ENCODE measurements at regions of chr1 and their contacts with region 1.

Region 1: DNA sequence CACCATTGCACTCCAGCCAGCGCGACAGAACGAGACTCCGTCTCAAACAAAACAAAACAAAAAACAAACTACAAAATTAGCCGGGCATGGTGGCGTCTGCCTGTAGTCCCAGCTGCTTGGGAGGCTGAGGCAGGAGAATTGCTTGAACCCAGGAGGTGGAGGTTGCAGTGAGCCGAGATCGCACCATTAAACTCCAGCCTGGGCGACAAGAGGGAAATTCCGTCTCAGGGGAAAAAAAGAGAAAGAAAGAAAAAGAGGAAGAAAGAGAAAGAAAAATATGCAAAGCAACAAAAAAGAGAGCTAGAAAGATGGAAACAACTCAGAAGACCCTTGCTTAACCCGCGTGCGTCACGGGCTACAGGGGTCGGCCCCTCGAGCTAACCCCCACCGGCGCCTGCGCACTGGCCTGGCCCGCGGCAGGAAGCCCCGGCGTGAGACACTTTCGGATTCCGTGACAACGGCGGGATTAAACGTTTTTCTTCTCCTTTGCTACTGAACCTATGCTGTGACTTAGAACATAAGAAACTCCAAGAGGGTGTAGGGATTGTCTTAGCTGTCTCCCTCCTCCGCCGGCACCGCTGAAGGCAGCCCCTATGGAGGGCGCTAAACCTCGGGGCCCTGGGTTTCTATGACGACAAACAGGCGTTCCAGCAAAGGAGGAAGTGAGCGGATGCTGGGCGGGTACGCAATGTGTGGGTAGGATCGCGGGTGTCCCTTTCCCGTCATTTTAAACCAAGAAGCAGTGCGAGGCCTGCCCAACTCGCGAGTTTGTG is at the start of gene AXDND1:
- DNase-seq: peak; percentile 86 to 94 (median 90)
- ATAC-seq: peak; percentile 97
- H3K4me3 ChIP-seq: peak within 1 kb of the TSS; percentile 57
- H3K27ac ChIP-seq: peak within 1 kb of the TSS; percentile 96
- H3K4me1 ChIP-seq: peaks cover 14 to 16% of the 10 kb centered on the region in 2 experiments
- H3K27me3 ChIP-seq: no peaks in the 10 kb centered on the region
- CTCF ChIP-seq: peak in 2 of 3 experiments; percentile 40 to 54; a peak in 4 of 6 replicates
- EP300 ChIP-seq: 0 out of 2 replicates have a peak, but pooled peaks have one; percentile 24
- POLR2A ChIP-seq: peak; percentile 76
- RAD21 ChIP-seq: peak; percentile 6 to 22; a peak in 2 of 4 replicates
- polyA plus RNA-seq, gene AXDND1: 0.03 to 0.13 TPM

Region 2: DNA sequence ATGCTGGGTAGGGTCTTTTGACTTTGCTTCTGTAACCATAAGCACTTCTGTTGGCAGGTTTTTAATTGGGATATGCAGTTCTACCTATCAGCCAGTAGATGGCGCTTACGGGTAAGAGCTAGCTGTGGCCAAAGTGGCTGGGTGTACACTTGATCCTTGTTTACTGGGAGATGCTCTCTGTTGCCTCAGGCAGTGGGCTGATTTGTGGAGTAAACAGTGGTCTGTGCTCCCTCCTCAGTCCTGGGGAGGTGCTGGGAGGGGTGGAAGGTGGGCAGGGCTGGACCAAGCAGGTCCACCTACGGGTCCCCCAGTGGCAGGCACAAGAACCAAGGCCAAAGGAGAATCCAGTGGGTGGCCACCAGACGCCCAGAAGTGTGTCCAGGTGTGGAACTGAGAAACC is 597.1 kb before region 1 on chr1:
- CTCF ChIA-PET with region 1: no interaction called
- POLR2A ChIA-PET with region 1: no interaction called
- in situ Hi-C with region 1: loop called (anchors 10 kb)
- intact Hi-C with region 1: no loop called
- DNase-seq: peak; percentile 58 to 64 (median 62)
- ATAC-seq: peak; percentile 88
- H3K4me3 ChIP-seq: no peak overlapping the region
- H3K27ac ChIP-seq: no peak overlapping the region
- H3K4me1 ChIP-seq: no peaks in the 10 kb centered on the region
- H3K27me3 ChIP-seq: no peaks in the 10 kb centered on the region
- CTCF ChIP-seq: peak; percentile 78 to 93 (median 93)
- EP300 ChIP-seq: no peak
- POLR2A ChIP-seq: no peak
- RAD21 ChIP-seq: peak; percentile 74 to 81

Region 3: DNA sequence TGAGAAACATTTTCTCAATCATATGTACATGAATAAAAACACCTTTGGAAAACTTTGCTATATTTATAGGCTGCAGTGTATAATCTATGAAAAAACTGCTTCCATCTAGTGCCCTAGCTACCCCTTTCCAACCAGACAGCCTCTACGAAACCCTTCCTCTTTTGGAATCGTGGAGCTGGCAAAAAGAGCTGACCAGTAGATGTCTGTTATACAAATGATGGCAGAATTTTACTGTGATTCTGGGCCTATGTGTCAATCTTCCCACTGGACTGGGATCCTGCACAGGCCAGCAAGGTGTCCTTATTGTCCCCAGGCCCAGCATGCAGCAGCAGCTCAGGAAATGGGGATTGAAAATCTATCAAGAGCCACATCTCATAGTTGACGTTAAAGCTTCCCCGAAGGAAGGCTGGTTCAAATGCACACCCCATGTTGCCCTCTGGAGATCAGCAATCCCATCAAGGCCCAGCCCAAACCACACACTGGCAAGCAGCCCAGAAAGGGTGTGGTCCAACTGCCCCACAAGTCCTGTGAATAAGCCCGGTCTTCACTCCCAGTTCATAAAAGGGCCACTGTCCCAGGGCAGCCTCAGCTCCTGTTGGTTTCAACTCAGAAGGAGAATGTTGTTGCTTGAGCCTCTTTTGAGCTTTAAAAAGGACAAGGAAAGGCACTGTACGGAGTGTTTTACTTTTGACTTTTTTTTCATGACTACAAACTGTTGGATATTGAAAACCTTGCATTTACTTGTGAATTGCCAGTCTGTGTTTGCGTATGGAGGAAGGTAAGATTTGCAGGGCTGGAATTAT is 348.6 kb before region 1 on chr1:
- CTCF ChIA-PET with region 1: no interaction called
- POLR2A ChIA-PET with region 1: no interaction called
- in situ Hi-C with region 1: no loop called
- intact Hi-C with region 1: no loop called
- DNase-seq: peak; percentile 87 to 99 (median 91)
- ATAC-seq: peak; percentile 91
- H3K4me3 ChIP-seq: peak overlapping the region; percentile 21
- H3K27ac ChIP-seq: peak overlapping the region; percentile 67
- H3K4me1 ChIP-seq: peaks cover 39 to 43% of the 10 kb centered on the region in 2 experiments
- H3K27me3 ChIP-seq: no peaks in the 10 kb centered on the region
- CTCF ChIP-seq: no peak; a peak in 1 of 6 replicates
- EP300 ChIP-seq: peak; percentile 91
- POLR2A ChIP-seq: peak; percentile 71
- RAD21 ChIP-seq: peak in 1 of 2 experiments; percentile 10; a peak in 1 of 4 replicates

Region 4: DNA sequence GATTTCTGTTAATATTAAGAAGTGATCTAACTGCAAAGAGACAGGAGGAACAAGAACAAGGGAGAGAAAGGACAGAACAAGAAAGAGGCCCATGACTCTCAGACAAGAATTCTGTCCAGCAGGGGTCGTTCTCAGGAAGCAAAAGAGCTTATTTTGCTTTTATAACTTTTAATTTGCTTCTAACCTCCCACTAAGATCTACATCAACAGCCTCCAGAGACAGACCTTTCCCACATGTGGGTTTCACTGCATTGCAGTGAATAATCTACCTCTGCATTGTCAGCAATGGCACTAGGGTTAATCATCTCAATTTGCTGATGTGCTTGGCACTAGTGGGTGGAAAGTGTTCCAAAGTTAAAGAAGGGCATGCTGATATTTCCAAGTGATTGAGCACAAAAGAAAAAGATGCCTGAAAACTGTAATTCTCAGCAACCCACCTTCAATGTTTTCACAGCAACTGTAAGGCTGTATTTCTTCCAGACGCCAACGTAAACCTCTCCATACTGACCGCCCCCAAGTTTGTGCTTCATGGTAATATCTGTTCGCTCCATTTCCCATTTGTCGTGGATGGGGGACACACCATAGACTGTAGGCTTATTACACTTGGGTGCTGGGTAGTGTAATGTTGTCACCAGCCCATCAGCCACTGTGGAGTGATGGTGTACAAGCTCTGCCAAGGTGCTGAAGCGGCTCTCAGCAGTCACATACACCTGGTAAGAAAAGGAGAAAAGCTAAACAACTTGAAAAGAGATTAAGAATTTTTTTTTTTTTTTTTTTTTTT is 244.2 kb before region 1 on chr1:
- CTCF ChIA-PET with region 1: interaction called, 22 read pairs
- POLR2A ChIA-PET with region 1: interaction called, 3 read pairs
- in situ Hi-C with region 1: loop called (anchors 10 kb)
- intact Hi-C with region 1: loop called (anchors 1 kb)
- DNase-seq: peak in 2 of 4 experiments; percentile 38 to 58
- ATAC-seq: peak; percentile 83
- H3K4me3 ChIP-seq: no peak overlapping the region
- H3K27ac ChIP-seq: no peak overlapping the region
- H3K4me1 ChIP-seq: no peaks in the 10 kb centered on the region
- H3K27me3 ChIP-seq: no peaks in the 10 kb centered on the region
- CTCF ChIP-seq: peak; percentile 48 to 77 (median 73); a peak in 5 of 6 replicates
- EP300 ChIP-seq: no peak
- POLR2A ChIP-seq: no peak
- RAD21 ChIP-seq: peak; percentile 81 to 89

Region 5: GRCh38 chr1:179251675-179252074 is 113.8 kb before region 1 on chr1:
- CTCF ChIA-PET with region 1: interaction called, 17 read pairs
- POLR2A ChIA-PET with region 1: no interaction called
- in situ Hi-C with region 1: no loop called
- intact Hi-C with region 1: loop called (anchors 1 kb)
- DNase-seq: peak in 2 of 4 experiments; percentile 28 to 44
- ATAC-seq: peak; percentile 84
- H3K4me3 ChIP-seq: no peak overlapping the region
- H3K27ac ChIP-seq: no peak overlapping the region
- H3K4me1 ChIP-seq: no peaks in the 10 kb centered on the region; a peak in 1 of 5 replicates
- H3K27me3 ChIP-seq: no peaks in the 10 kb centered on the region; a peak in 1 of 5 replicates
- CTCF ChIP-seq: peak; percentile 55 to 85 (median 56); a peak in 4 of 6 replicates
- EP300 ChIP-seq: no peak
- POLR2A ChIP-seq: no peak
- RAD21 ChIP-seq: peak; percentile 80 to 94

Region 6: GRCh38 chr1:179840107-179840506 is 474.6 kb after region 1 on chr1:
- CTCF ChIA-PET with region 1: no interaction called
- POLR2A ChIA-PET with region 1: no interaction called
- in situ Hi-C with region 1: no loop called
- intact Hi-C with region 1: no loop called
- DNase-seq: no peak
- ATAC-seq: no peak
- H3K4me3 ChIP-seq: no peak overlapping the region
- H3K27ac ChIP-seq: no peak overlapping the region
- H3K4me1 ChIP-seq: no peaks in the 10 kb centered on the region
- H3K27me3 ChIP-seq: no peaks in the 10 kb centered on the region
- CTCF ChIP-seq: no peak
- EP300 ChIP-seq: no peak
- POLR2A ChIP-seq: no peak
- RAD21 ChIP-seq: no peak